Activated T-helper 1 cell treated with anti-CD3 and anti-CD28 coated beads, Interleukin-12 subunit alpha, Interleukin-12 subunit beta, Interleukin-2, Interleukin-4 antibody, amounts not matched to agents 30 ng/mL and 10 ng/mL and 1 ng/mL, durations not matched to agents 14 hours and 24 hours and 36 hours (primary cell): ENCODE measurements at regions of chr19 and their contacts with region 1.

Region 1: DNA sequence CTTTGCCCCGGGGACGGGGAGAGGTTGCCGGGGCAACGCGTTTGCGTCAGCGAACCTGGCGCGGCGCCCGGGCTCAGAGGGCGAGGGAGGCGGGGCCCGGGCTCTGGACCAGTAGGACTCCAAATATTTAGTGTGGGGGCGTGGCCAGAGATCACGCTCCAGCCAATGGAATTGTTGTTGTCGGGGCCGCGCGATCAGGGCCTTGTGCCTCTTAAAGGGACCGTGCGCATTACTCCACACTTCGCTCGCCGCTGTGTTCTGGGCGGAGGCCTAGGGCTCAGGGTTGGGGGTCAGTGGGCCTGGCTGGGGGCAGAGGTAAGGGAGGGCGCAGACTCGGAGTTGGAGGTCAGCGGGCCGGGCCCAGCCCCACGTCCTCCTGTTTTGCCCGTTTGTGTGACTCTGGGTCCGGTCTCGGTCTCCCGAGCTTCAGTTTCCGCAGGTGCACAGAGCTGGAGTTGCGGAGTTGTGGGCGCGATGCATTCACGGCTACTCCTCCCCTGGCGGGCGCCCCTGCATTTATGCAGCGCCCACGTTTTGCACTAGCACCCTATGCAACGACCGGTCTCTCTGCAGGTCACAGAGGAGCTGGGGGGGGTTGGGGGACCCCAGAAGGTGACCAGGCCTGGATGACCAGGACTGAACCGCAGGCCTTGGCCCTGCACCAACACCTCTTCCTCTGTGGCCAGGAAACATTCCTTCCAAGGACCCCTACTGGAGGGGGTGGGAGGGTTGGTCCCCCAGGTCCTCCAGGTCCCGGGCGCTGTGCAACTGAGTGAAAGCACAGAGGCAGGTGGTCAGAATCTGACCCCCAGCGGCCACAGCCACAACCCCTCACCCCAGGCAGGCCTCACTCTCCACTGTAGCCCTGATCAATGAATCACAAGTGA is 10.7 kb upstream of the MKNK2 start:
- DNase-seq: peak; percentile 99
- H3K4me3 Mint-ChIP-seq: peak overlapping the region; percentile 89
- H3K27ac Mint-ChIP-seq: peak overlapping the region; percentile 92
- H3K4me1 Mint-ChIP-seq: peaks cover 17% of the 10 kb centered on the region
- H3K27me3 Mint-ChIP-seq: no peaks in the 10 kb centered on the region

Region 2: DNA sequence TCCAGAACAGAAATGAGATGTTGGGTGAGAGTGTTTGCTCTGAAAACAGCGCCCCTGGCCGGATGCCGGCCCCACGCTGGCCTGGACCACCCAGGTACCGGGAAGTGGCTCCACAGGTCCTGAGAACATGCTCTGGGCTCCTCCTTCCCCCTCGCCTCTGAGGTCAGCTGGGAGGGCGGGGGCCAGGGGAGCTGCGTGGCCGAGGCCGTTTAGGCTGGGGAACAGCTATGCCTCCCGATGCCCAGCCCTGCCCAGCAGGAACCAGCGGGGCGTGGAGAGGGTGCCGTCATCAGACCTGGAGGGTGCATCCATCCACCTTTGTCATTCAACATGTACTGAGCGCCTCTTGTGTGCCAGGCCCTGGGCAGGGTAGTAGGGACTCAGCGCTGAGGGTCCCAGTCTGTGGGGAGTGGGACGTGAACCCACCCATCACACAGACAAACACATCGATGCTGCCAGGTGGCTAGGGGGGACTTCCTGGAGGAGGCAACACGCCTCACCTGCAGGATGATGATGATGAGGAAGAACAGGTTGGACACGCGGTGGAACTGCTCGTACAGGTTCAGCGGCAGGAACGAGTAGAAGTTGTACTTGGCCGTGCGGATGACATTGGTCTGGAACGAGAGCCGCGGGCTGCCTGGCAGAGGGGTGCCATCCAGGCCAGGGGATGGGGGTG is 253.9 kb before region 1 on chr19:
- intact Hi-C with region 1: no loop called
- DNase-seq: no peak
- H3K4me3 Mint-ChIP-seq: no peak overlapping the region
- H3K27ac Mint-ChIP-seq: no peak overlapping the region
- H3K4me1 Mint-ChIP-seq: peaks cover 15% of the 10 kb centered on the region
- H3K27me3 Mint-ChIP-seq: no peaks in the 10 kb centered on the region

Region 3: GRCh38 chr19:1896508-1896907 is 165.2 kb before region 1 on chr19:
- intact Hi-C with region 1: loop called (anchors 2 kb)
- DNase-seq: no peak
- H3K4me3 Mint-ChIP-seq: peak overlapping the region; percentile 51
- H3K27ac Mint-ChIP-seq: peak overlapping the region; percentile 68
- H3K4me1 Mint-ChIP-seq: peaks cover 17% of the 10 kb centered on the region
- H3K27me3 Mint-ChIP-seq: peaks cover 1% of the 10 kb centered on the region

Region 4: GRCh38 chr19:2041683-2042484 is 19.9 kb before region 1 on chr19:
- intact Hi-C with region 1: loop called (anchors 1 kb)
- DNase-seq: peak; percentile 99
- H3K4me3 Mint-ChIP-seq: peak overlapping the region; percentile 81
- H3K27ac Mint-ChIP-seq: peak overlapping the region; percentile 87
- H3K4me1 Mint-ChIP-seq: peaks cover 4% of the 10 kb centered on the region
- H3K27me3 Mint-ChIP-seq: no peaks in the 10 kb centered on the region

Region 5: GRCh38 chr19:2050991-2051772 is 10.6 kb before region 1 on chr19 and contains the start of gene MKNK2:
- intact Hi-C with region 1: loop called (anchors 1 kb)
- DNase-seq: peak; percentile 92
- H3K4me3 Mint-ChIP-seq: peak within 1 kb of the TSS; percentile 87
- H3K27ac Mint-ChIP-seq: peak within 1 kb of the TSS; percentile 87
- H3K4me1 Mint-ChIP-seq: peaks cover 27% of the 10 kb centered on the region
- H3K27me3 Mint-ChIP-seq: no peaks in the 10 kb centered on the region
- total RNA-seq, gene MKNK2: 150 and 166 TPM in 2 replicates

Region 6: DNA sequence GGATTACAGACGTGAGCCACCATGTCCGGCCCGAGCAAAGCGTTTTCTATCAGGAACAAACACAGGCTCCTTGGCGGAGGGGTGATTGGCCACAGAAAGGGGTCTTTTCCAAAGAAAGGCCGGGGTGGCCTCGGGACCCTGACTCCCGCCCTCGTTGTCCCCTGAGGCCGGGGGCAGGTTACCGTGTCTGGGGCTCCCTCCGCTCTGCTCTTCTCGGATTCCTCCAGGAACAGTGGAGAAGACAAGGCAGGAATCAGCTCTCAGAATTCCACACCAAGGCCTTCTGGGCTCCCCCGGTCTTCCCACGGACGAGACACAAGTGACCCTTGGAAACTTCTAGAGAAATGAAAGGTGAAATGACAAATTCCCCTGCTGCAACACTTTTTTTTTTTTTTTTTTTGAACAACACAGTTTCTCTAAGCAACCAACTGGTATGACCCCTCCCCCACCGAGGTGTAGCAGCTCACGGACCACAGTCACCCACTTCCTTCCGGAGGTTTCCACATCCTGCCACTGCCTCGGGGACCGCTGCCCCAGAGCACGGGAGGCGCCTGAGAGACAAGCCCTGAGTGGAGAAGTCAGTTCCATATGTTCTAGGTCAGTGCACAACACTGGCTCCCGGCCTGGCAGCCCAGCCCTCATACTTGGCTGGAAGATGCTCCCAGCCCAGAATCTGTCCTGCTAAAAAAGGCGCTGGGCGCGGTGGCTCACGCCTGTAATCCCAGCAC is 23.4 kb after region 1 on chr19:
- intact Hi-C with region 1: loop called (anchors 1 kb)
- DNase-seq: peak; percentile 96
- H3K4me3 Mint-ChIP-seq: peak overlapping the region; percentile 94
- H3K27ac Mint-ChIP-seq: peak overlapping the region; percentile 96
- H3K4me1 Mint-ChIP-seq: peaks cover 69% of the 10 kb centered on the region
- H3K27me3 Mint-ChIP-seq: peaks cover 2% of the 10 kb centered on the region

Region 7: DNA sequence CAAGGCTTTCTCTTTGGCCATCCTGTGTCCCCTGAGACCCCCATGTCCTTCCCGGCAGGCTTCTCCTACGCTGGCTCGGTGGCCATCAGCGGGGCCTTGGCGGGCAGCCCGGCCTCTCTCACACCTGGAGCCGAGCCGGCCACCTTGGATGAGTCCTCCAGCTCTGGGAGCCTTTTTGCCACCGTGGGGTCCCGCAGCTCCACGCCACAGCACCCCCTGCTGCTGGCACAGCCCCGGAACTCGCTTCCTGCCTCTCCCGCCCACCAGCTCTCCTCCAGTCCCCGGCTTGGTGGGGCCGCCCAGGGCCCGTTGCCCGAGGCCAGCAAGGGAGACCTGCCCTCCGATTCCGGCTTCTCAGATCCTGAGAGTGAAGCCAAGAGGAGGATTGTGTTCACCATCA is 160.2 kb after region 1 on chr19:
- intact Hi-C with region 1: no loop called
- DNase-seq: no peak
- H3K4me3 Mint-ChIP-seq: no peak overlapping the region
- H3K27ac Mint-ChIP-seq: no peak overlapping the region
- H3K4me1 Mint-ChIP-seq: no peaks in the 10 kb centered on the region
- H3K27me3 Mint-ChIP-seq: no peaks in the 10 kb centered on the region

Region 8: DNA sequence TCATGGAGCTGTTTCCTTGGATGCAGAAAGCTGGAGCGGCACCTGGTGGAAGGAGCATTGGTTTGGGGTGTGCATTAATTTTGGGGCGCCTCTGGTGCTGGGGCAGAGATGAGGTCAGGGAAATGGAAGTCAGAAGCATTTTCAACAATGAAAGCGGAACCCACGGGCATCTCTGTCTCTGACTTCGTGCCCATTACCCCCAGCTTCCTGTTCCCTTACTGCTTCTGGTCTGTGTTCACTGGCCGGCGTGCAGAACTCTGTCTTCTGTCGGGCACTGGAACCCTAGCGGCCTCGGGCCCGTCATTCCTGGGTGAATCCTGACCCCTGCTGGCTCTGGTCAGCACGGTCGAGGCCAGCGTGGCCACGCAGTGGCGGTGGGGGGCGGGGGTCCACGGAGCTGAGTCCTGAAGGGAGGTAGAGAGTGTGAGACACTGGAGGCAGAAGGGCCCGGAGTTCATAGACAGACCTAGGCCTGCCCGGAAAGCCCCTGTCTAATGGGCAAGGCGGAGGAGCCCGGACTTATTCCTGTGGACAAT is 254.1 kb after region 1 on chr19:
- intact Hi-C with region 1: no loop called
- DNase-seq: no peak
- H3K4me3 Mint-ChIP-seq: no peak overlapping the region
- H3K27ac Mint-ChIP-seq: no peak overlapping the region
- H3K4me1 Mint-ChIP-seq: no peaks in the 10 kb centered on the region
- H3K27me3 Mint-ChIP-seq: peaks cover 15% of the 10 kb centered on the region

Region 9: GRCh38 chr19:3047425-3048189 is 985.9 kb after region 1 on chr19:
- intact Hi-C with region 1: no loop called
- DNase-seq: peak; percentile 41
- H3K4me3 Mint-ChIP-seq: peak overlapping the region; percentile 83
- H3K27ac Mint-ChIP-seq: peak overlapping the region; percentile 69
- H3K4me1 Mint-ChIP-seq: peaks cover 8% of the 10 kb centered on the region
- H3K27me3 Mint-ChIP-seq: peaks cover 14% of the 10 kb centered on the region